MCF 10A (cell line): ENCODE measurements at regions of chr5 and their contacts with region 1.

Region 1: DNA sequence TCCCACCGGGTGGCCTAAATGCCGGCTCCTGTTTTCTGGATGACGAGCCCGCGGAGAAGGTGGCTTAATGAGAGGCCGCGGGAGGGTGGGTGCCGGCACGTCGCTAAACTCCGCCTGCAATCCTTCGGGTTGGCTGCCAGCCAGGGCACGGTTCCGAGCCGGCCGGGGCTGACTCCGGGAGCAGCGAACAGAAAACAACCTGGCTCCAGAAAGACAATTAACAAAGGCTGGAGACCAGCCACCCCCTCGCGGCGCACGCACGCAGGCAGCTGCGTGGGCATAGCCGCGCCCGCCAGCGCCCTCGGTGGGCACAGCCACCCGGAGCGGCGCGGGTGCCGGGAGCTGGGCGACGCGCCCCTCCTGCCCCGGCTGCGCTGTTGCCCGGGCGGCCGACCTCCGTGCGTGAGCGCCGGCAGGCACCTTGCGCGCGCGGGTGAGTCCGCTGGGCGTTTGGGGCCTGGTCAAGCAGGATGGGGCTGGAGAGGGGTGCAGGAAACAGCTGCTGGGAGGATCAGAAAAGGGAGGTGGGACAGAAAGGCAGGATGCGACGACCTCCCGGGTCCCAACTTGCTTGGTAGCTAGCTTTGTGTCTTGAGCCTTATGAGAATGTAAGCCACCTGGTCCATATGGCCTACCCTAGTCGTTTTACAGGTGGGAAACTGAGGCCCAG is at the start of gene ARHGEF37:
- DNase-seq: peak; percentile 83
- H3K4me3 Mint-ChIP-seq: peak within 1 kb of the TSS; percentile 75
- H3K27ac Mint-ChIP-seq: peak within 1 kb of the TSS; percentile 76
- H3K4me1 Mint-ChIP-seq: peaks cover 26% of the 10 kb centered on the region
- H3K27me3 Mint-ChIP-seq: no peaks in the 10 kb centered on the region
- CTCF ChIP-seq: no peak
- total RNA-seq, gene ARHGEF37: 3.9 and 5.1 TPM in 2 replicates

Region 2: DNA sequence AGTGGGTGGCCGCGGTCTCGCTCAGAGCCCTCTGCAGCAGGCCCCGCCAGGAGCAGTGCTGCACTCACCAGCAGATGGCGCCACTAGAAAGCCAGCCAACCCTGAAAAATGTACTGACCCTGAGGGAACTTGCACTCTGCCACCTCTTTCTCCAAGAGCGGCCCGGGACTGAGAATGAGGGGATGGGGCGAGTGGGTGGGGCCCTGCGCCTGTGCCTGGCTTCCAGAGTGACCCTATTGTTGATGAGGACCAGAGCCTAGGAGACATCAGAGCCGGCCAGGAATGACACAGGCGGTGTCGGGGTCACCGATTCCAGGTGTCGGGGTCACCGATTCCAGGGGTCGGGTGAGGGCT is 199.4 kb before region 1 on chr5:
- CTCF ChIA-PET with region 1: interaction called, 14 read pairs
- POLR2A ChIA-PET with region 1: no interaction called
- intact Hi-C with region 1: no loop called
- DNase-seq: peak; percentile 78
- H3K4me3 Mint-ChIP-seq: no peak overlapping the region
- H3K27ac Mint-ChIP-seq: no peak overlapping the region
- H3K4me1 Mint-ChIP-seq: no peaks in the 10 kb centered on the region
- H3K27me3 Mint-ChIP-seq: no peaks in the 10 kb centered on the region
- CTCF ChIP-seq: peak; percentile 97

Region 3: GRCh38 chr5:149544028-149544420 is 37.3 kb before region 1 on chr5:
- CTCF ChIA-PET with region 1: no interaction called
- POLR2A ChIA-PET with region 1: interaction called, 74 read pairs
- intact Hi-C with region 1: no loop called
- DNase-seq: no peak
- H3K4me3 Mint-ChIP-seq: peak overlapping the region; percentile 14
- H3K27ac Mint-ChIP-seq: no peak overlapping the region
- H3K4me1 Mint-ChIP-seq: peaks cover 33% of the 10 kb centered on the region
- H3K27me3 Mint-ChIP-seq: no peaks in the 10 kb centered on the region
- CTCF ChIP-seq: no peak

Region 4: GRCh38 chr5:149596713-149597112 is 15.4 kb after region 1 on chr5:
- CTCF ChIA-PET with region 1: interaction called, 6 read pairs
- POLR2A ChIA-PET with region 1: interaction called, 26 read pairs
- intact Hi-C with region 1: no loop called
- DNase-seq: no peak
- H3K4me3 Mint-ChIP-seq: no peak overlapping the region
- H3K27ac Mint-ChIP-seq: peak overlapping the region; percentile 62
- H3K4me1 Mint-ChIP-seq: peaks cover 25% of the 10 kb centered on the region
- H3K27me3 Mint-ChIP-seq: no peaks in the 10 kb centered on the region
- CTCF ChIP-seq: no peak

Region 5: GRCh38 chr5:149611326-149611725 is 30.0 kb after region 1 on chr5:
- CTCF ChIA-PET with region 1: interaction called, 58 read pairs
- POLR2A ChIA-PET with region 1: interaction called, 85 read pairs
- intact Hi-C with region 1: no loop called
- DNase-seq: no peak
- H3K4me3 Mint-ChIP-seq: no peak overlapping the region
- H3K27ac Mint-ChIP-seq: no peak overlapping the region
- H3K4me1 Mint-ChIP-seq: peaks cover 26% of the 10 kb centered on the region
- H3K27me3 Mint-ChIP-seq: no peaks in the 10 kb centered on the region
- CTCF ChIP-seq: no peak